ENCODE measurements at regions of chr3 and their contacts with region 1.

Region 1: GRCh38 chr3:141796081-141796888 is 33.1 kb downstream of the GRK7 start:
- DNase-seq: peak; percentile 91
- ATAC-seq: peak; percentile 85
- H3K4me3 Mint-ChIP-seq: peak overlapping the region; percentile 84
- H3K27ac Mint-ChIP-seq: peak overlapping the region; percentile 98
- H3K4me1 Mint-ChIP-seq: peaks cover 42% of the 10 kb centered on the region
- H3K27me3 Mint-ChIP-seq: no peaks in the 10 kb centered on the region

Region 2: GRCh38 chr3:141875374-141875892 is 79.1 kb after region 1 on chr3:
- CTCF ChIA-PET with region 1: interaction called, 42 read pairs
- DNase-seq: peak; percentile 91
- ATAC-seq: peak; percentile 63
- H3K4me3 Mint-ChIP-seq: peak overlapping the region; percentile 90
- H3K27ac Mint-ChIP-seq: peak overlapping the region; percentile 95
- H3K4me1 Mint-ChIP-seq: peaks cover 30% of the 10 kb centered on the region
- H3K27me3 Mint-ChIP-seq: no peaks in the 10 kb centered on the region

Measured in activated CD8-positive, alpha-beta memory T cell treated with anti-CD3 and anti-CD28 coated beads, Interleukin-2, amount 10 ng/mL, durations not matched to agents 7 days and 5 days (primary cell).